OCI-LY7 (cell line): ENCODE measurements at regions of chr1 and their contacts with region 1.

Region 1: DNA sequence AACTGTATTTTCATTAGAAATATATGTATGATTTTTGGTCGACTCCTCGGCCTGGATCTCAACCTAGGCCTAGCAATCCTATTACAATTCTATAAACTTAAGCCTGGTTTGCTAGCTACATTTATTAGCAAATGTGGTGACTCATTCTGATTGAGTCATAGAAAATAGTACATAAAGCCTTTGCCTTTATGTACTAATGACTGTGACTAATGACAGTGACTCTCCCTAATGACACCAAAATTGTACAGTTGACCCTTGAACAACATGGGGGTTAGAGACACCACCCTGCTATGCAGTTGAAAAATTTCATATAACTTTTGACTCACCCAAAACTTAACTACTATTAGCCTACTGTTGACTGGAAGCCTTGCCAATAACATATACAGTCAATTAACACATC is 78.9 kb downstream of the CLEC20A start:
- DNase-seq: no peak
- H3K4me3 ChIP-seq: no peak overlapping the region
- H3K27ac ChIP-seq: no peak overlapping the region
- H3K4me1 ChIP-seq: peaks cover 5% of the 10 kb centered on the region
- CTCF ChIP-seq: no peak

Region 2: GRCh38 chr1:178397678-178398077 is 20.2 kb before region 1 on chr1:
- CTCF ChIA-PET with region 1: no interaction called
- POLR2A ChIA-PET with region 1: no interaction called
- intact Hi-C with region 1: no loop called
- DNase-seq: no peak
- H3K4me3 ChIP-seq: no peak overlapping the region
- H3K27ac ChIP-seq: no peak overlapping the region
- H3K4me1 ChIP-seq: no peaks in the 10 kb centered on the region
- CTCF ChIP-seq: no peak

Region 3: GRCh38 chr1:178465011-178465410 is 47.2 kb after region 1 on chr1:
- CTCF ChIA-PET with region 1: no interaction called
- POLR2A ChIA-PET with region 1: no interaction called
- intact Hi-C with region 1: loop called (anchors 1 kb)
- DNase-seq: no peak
- H3K4me3 ChIP-seq: no peak overlapping the region
- H3K27ac ChIP-seq: no peak overlapping the region
- H3K4me1 ChIP-seq: no peaks in the 10 kb centered on the region
- CTCF ChIP-seq: no peak